ENCODE measurements at regions of chr9 and their contacts with region 1.

Region 1: DNA sequence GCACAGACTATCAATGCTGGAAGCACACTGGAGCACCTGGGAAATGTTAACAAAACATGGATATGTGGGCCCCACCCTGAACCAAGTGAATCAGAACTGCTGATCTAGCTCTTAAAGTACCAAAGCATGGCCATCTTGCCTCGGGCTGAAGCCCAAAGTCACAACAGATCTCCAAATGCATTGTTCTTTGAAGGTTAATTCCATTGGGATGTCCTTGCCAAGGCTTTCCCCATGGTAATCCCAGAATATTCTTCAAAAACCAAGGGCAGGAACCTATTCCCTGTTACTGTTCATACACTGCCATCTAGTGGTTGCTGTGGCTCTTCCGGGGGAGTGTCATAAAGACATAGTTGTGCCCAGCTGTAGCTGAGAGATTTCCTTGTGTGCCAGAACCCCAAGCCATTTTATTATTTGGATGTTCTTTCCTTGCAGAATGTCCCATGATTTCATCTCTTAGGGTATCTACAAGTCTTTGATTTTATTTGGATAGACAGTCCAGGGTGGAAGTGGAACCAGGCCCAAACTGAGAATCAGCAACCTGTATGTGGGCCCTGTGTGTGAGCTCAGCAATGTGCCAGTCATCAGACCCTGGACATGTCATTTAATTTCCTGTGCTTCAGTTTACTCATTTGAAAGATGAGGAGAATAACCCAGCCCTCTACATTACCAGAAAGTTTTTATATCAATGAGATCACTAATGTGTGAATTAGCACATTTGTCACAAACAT is 290.0 kb downstream of the ACTL7B start:
- DNase-seq: peak; percentile 47
- H3K4me3 Mint-ChIP-seq: no peak overlapping the region
- H3K27ac Mint-ChIP-seq: no peak overlapping the region
- H3K4me1 Mint-ChIP-seq: peaks cover 10% of the 10 kb centered on the region
- H3K27me3 Mint-ChIP-seq: no peaks in the 10 kb centered on the region
- CTCF ChIP-seq: no peak

Region 2: GRCh38 chr9:107484117-107484723 is 1081.6 kb before region 1 on chr9:
- CTCF ChIA-PET with region 1: interaction called, 3 read pairs
- intact Hi-C with region 1: loop called (anchors 1 kb)
- DNase-seq: peak; percentile 34
- H3K4me3 Mint-ChIP-seq: no peak overlapping the region
- H3K27ac Mint-ChIP-seq: no peak overlapping the region
- H3K4me1 Mint-ChIP-seq: peaks cover 7% of the 10 kb centered on the region
- H3K27me3 Mint-ChIP-seq: no peaks in the 10 kb centered on the region
- CTCF ChIP-seq: peak; percentile 19

Region 3: GRCh38 chr9:108272349-108272899 is 293.4 kb before region 1 on chr9:
- CTCF ChIA-PET with region 1: no interaction called
- intact Hi-C with region 1: loop called (anchors 2 kb)
- DNase-seq: peak; percentile 66
- H3K4me3 Mint-ChIP-seq: peak overlapping the region; percentile 70
- H3K27ac Mint-ChIP-seq: peak overlapping the region; percentile 90
- H3K4me1 Mint-ChIP-seq: peaks cover 36% of the 10 kb centered on the region
- H3K27me3 Mint-ChIP-seq: no peaks in the 10 kb centered on the region
- CTCF ChIP-seq: peak; percentile 49

Region 4: GRCh38 chr9:108412755-108413154 is 153.1 kb before region 1 on chr9:
- CTCF ChIA-PET with region 1: interaction called, 15 read pairs
- intact Hi-C with region 1: loop called (anchors 1 kb)
- DNase-seq: peak; percentile 5
- H3K4me3 Mint-ChIP-seq: no peak overlapping the region
- H3K27ac Mint-ChIP-seq: no peak overlapping the region
- H3K4me1 Mint-ChIP-seq: no peaks in the 10 kb centered on the region
- H3K27me3 Mint-ChIP-seq: no peaks in the 10 kb centered on the region
- CTCF ChIP-seq: no peak

Region 5: GRCh38 chr9:108813951-108814601 is 248.3 kb after region 1 on chr9:
- CTCF ChIA-PET with region 1: no interaction called
- intact Hi-C with region 1: loop called (anchors 5 kb)
- DNase-seq: peak; percentile 50
- H3K4me3 Mint-ChIP-seq: no peak overlapping the region
- H3K27ac Mint-ChIP-seq: no peak overlapping the region
- H3K4me1 Mint-ChIP-seq: no peaks in the 10 kb centered on the region
- H3K27me3 Mint-ChIP-seq: peaks cover 26% of the 10 kb centered on the region
- CTCF ChIP-seq: no peak